Psoas muscle (tissue), 8 donors: ENCODE measurements at regions of chrX and their contacts with region 1.

Region 1: DNA sequence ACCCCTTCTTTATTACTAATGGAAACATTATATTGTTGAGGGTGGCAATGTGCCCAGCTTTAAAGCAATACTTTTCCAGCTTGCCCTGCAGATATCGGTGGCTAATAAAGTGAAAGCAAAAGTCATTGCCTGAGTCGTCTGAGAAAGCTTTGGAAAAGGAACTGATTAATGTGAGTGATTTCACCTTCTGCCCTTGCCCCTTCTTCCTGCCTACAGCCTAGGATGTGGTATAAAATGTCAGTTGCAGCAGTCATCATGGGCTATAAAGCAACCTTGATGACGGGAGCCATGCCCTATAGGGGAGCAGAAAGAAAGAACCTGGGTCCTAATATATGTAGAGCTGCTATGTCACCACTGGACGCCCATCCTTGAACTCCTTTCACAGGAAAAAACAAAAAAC is 132.4 kb upstream of the USP9X start:
- DNase-seq: no peak
- ATAC-seq: no peak
- H3K4me3 ChIP-seq: peak overlapping the region; percentile 35
- H3K27ac ChIP-seq: no peak overlapping the region
- H3K4me1 ChIP-seq: no peaks in the 10 kb centered on the region
- H3K27me3 ChIP-seq: peaks cover 0 to 16% (median 0%) of the 10 kb centered on the region in 3 donors
- CTCF ChIP-seq: no peak

Region 2: GRCh38 chrX:40996886-40997530 is 44.2 kb after region 1 on chrX:
- intact Hi-C with region 1: loop called in 1 of 2 experiments (anchors 5 kb)
- DNase-seq: no peak
- ATAC-seq: peak; percentile 55 to 89 (median 88)
- H3K4me3 ChIP-seq: no peak overlapping the region
- H3K27ac ChIP-seq: no peak overlapping the region
- H3K4me1 ChIP-seq: no peaks in the 10 kb centered on the region
- H3K27me3 ChIP-seq: peaks cover 0 to 19% (median 0%) of the 10 kb centered on the region in 3 donors
- CTCF ChIP-seq: no peak